Colonic mucosa (tissue), 4 donors: ENCODE measurements at regions of chr11 and their contacts with region 1.

Region 1: GRCh38 chr11:76734456-76735420 is 48.4 kb upstream of the TSKU start:
- DNase-seq: no peak
- H3K4me3 ChIP-seq: no peak overlapping the region
- H3K27ac ChIP-seq: no peak overlapping the region
- H3K4me1 ChIP-seq: no peaks in the 10 kb centered on the region
- H3K27me3 ChIP-seq: no peaks in the 10 kb centered on the region
- CTCF ChIP-seq: no peak

Region 2: GRCh38 chr11:76799066-76799804 is 64.5 kb after region 1 on chr11:
- intact Hi-C with region 1: loop called (anchors 1 kb)
- DNase-seq: peak; percentile 88
- H3K4me3 ChIP-seq: peak overlapping the region; percentile 4
- H3K27ac ChIP-seq: peak overlapping the region; percentile 42
- H3K4me1 ChIP-seq: peaks cover 5% of the 10 kb centered on the region
- H3K27me3 ChIP-seq: no peaks in the 10 kb centered on the region
- CTCF ChIP-seq: peak; percentile 93

Region 3: GRCh38 chr11:76919887-76920746 is 185.4 kb after region 1 on chr11:
- intact Hi-C with region 1: loop called (anchors 2 kb)
- DNase-seq: peak; percentile 89
- H3K4me3 ChIP-seq: no peak overlapping the region
- H3K27ac ChIP-seq: peak overlapping the region; percentile 58
- H3K4me1 ChIP-seq: no peaks in the 10 kb centered on the region
- H3K27me3 ChIP-seq: no peaks in the 10 kb centered on the region
- CTCF ChIP-seq: peak; percentile 96